PC-3 (cell line): ENCODE measurements at regions of chr5 and their contacts with region 1.

Region 1: DNA sequence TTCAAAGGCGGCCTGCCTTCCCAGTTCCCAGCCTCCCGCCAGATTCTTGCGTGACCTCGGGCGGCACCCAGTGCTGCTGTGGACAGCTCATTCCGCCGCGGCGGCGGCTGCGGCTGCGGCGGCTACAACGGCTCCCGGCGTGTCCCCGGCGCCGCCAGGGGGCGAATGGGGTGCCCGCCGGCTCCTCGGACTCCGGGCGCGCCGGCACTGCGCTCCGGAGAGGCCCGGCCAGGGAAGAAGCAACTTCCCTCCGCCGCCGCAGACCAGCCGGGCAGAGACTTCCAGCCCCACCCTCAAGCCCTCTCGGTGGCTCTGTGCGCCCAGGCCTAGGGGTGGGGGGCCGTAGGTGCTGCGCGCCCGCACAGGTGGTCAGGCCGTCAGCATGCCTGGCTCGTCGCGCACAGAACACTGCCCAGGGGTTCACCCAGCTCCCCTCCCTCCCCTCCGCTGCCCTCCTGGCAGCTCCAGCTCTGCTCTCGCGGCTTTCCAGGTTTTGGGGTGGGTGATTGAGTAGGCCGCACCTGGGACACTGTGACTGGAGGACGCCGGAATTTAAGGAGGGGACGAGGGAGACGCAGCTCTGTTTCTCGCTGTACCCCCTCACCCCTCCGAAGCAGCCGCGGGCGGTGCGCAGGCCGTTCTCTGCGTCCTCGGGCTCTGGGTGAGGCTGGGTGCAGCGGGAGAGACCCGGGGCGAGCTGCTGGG is 20.2 kb downstream of the IGIP start:
- DNase-seq: peak; percentile 35
- ATAC-seq: peak; percentile 52
- H3K4me3 ChIP-seq: no peak overlapping the region
- H3K27ac ChIP-seq: no peak overlapping the region
- H3K4me1 ChIP-seq: no peaks in the 10 kb centered on the region
- H3K27me3 ChIP-seq: no peaks in the 10 kb centered on the region
- CTCF ChIP-seq: peak; percentile 42; the same call in 1 of the 2 replicates

Region 2: DNA sequence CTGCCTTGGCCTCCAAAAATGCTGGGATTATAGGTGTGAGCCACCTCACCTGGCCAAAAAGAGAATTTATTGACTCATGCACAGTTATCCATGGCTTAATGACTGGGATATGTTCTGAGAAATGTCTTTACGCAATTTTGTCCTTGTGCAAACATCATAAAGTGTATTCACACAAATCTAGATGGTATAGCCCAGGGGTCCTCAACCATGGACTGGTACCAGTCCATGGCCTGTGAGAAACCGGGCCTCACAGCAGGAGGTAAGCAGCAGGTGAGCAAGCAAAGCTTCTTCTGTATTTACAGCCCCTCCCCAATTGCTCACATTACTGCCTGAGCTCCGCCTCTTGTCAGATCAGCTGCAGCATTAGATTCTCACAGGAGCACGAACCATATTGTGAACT is 935.4 kb before region 1 on chr5:
- CTCF ChIA-PET with region 1: no interaction called
- POLR2A ChIA-PET with region 1: no interaction called
- intact Hi-C with region 1: no loop called
- DNase-seq: no peak
- ATAC-seq: no peak
- H3K4me3 ChIP-seq: no peak overlapping the region
- H3K27ac ChIP-seq: no peak overlapping the region
- H3K4me1 ChIP-seq: no peaks in the 10 kb centered on the region
- H3K27me3 ChIP-seq: no peaks in the 10 kb centered on the region
- CTCF ChIP-seq: no peak

Region 3: GRCh38 chr5:140075371-140075770 is 70.6 kb before region 1 on chr5:
- CTCF ChIA-PET with region 1: interaction called, 16 read pairs
- POLR2A ChIA-PET with region 1: interaction called, 9 read pairs
- intact Hi-C with region 1: loop called (anchors 1 kb)
- DNase-seq: peak; percentile 45
- ATAC-seq: no peak; the same call in 1 of the 2 replicates
- H3K4me3 ChIP-seq: no peak overlapping the region
- H3K27ac ChIP-seq: no peak overlapping the region
- H3K4me1 ChIP-seq: no peaks in the 10 kb centered on the region
- H3K27me3 ChIP-seq: peaks cover 2% of the 10 kb centered on the region; the same call in 1 of the 2 replicates
- CTCF ChIP-seq: peak; percentile 65

Region 4: DNA sequence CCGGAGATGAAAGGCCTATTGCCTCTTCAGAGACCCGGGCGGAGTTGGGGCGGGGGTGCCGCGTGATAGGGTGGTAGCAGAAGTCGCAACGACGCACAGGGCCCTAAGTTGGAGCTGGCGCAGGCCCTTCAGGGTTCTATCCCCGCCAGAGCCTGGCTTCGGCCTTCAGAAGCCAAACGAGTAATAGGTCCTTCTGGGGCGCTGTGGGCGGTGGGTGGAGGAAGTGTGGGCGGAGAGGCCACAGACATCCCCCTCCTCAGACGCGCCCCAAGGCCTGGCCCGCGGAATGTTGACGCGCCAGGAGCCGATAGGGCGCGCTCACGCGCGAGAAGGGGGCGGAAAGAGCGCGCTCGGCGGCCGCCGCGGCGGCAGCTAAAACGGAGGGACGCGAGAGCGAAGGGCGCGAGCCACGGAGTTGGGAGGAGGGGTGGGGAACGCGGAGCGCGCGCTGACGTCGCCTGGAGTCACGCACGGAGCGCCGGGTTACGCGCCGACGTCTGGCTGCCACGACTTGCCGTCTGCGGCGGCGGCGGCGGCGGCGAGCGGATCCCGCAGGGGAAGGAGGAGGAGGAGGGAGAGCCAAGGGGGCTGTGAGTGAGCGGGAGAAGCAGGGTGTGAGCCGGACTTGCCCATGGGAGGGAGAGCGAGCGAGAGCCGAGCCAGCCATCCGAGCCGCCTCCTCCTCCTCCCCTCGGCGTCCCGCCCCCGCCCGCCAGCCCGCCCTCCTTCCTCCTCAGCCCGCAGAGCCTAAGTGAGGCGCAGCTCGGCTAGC is 38.5 kb before region 1 on chr5:
- CTCF ChIA-PET with region 1: no interaction called
- POLR2A ChIA-PET with region 1: interaction called, 4 read pairs
- intact Hi-C with region 1: loop called (anchors 1 kb)
- DNase-seq: peak; percentile 93
- ATAC-seq: peak; percentile 90
- H3K4me3 ChIP-seq: peak overlapping the region; percentile 95
- H3K27ac ChIP-seq: peak overlapping the region; percentile 68
- H3K4me1 ChIP-seq: peaks cover 17% of the 10 kb centered on the region
- H3K27me3 ChIP-seq: no peaks in the 10 kb centered on the region
- CTCF ChIP-seq: peak; percentile 24

Region 5: DNA sequence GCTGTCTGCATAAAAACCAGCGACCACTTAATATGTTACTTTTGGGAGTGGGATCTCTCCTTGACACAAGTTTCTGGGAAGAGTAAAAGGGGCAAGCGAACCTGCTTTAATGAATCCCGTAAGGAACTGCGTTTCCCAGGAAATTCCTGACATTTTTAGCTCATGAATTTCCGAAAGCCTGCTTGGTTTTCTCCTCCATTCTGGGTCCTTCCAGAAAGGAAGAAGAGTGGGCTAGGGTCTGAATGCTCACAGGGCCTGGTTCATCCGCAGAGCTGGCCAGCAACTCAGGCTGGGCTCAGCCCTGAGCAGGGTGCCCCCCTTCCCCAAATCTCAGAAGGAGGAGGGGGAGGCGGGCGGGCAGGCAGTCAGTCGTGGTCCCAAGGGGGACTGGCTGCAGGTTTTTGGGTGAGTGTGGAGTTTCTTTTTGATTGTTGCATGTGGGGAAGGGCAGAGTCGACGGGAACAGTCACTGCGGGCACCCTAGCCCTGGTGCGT is 33.2 kb before region 1 on chr5:
- CTCF ChIA-PET with region 1: no interaction called
- POLR2A ChIA-PET with region 1: interaction called, 4 read pairs
- intact Hi-C with region 1: loop called (anchors 1 kb)
- DNase-seq: no peak
- ATAC-seq: no peak
- H3K4me3 ChIP-seq: peak overlapping the region; percentile 91; the same call in 1 of the 2 replicates
- H3K27ac ChIP-seq: no peak overlapping the region
- H3K4me1 ChIP-seq: peaks cover 36% of the 10 kb centered on the region
- H3K27me3 ChIP-seq: no peaks in the 10 kb centered on the region
- CTCF ChIP-seq: no peak

Region 6: GRCh38 chr5:140381972-140382371 is 236.0 kb after region 1 on chr5:
- CTCF ChIA-PET with region 1: no interaction called
- POLR2A ChIA-PET with region 1: no interaction called
- intact Hi-C with region 1: no loop called
- DNase-seq: no peak
- ATAC-seq: no peak; the same call in 1 of the 2 replicates
- H3K4me3 ChIP-seq: no peak overlapping the region
- H3K27ac ChIP-seq: no peak overlapping the region
- H3K4me1 ChIP-seq: no peaks in the 10 kb centered on the region
- H3K27me3 ChIP-seq: no peaks in the 10 kb centered on the region
- CTCF ChIP-seq: no peak